ENCODE measurements at regions of chr6 and their contacts with region 1.

Region 1: GRCh38 chr6:26175428-26176181 is 88.4 kb downstream of the HFE start:
- H3K4me3 Mint-ChIP-seq: no peak overlapping the region
- H3K27ac Mint-ChIP-seq: peak overlapping the region; percentile 43
- H3K4me1 Mint-ChIP-seq: peaks cover 29% of the 10 kb centered on the region
- H3K27me3 Mint-ChIP-seq: no peaks in the 10 kb centered on the region

Region 2: GRCh38 chr6:26103770-26104456 is 71.7 kb before region 1 on chr6:
- intact Hi-C with region 1: loop called (anchors 5 kb)
- H3K4me3 Mint-ChIP-seq: peak overlapping the region; percentile 81
- H3K27ac Mint-ChIP-seq: peak overlapping the region; percentile 92
- H3K4me1 Mint-ChIP-seq: peaks cover 7% of the 10 kb centered on the region
- H3K27me3 Mint-ChIP-seq: peaks cover 4% of the 10 kb centered on the region

Region 3: GRCh38 chr6:26157977-26158648 is 17.5 kb before region 1 on chr6:
- intact Hi-C with region 1: loop called (anchors 1 kb)
- H3K4me3 Mint-ChIP-seq: peak overlapping the region; percentile 81
- H3K27ac Mint-ChIP-seq: peak overlapping the region; percentile 99
- H3K4me1 Mint-ChIP-seq: peaks cover 29% of the 10 kb centered on the region
- H3K27me3 Mint-ChIP-seq: no peaks in the 10 kb centered on the region

Region 4: GRCh38 chr6:26270903-26271667 is 95.5 kb after region 1 on chr6:
- intact Hi-C with region 1: loop called (anchors 10 kb)
- H3K4me3 Mint-ChIP-seq: peak overlapping the region; percentile 60
- H3K27ac Mint-ChIP-seq: no peak overlapping the region
- H3K4me1 Mint-ChIP-seq: peaks cover 11% of the 10 kb centered on the region
- H3K27me3 Mint-ChIP-seq: no peaks in the 10 kb centered on the region